Psoas muscle (tissue), 8 donors: ENCODE measurements at regions of chr9 and their contacts with region 1.

Region 1: DNA sequence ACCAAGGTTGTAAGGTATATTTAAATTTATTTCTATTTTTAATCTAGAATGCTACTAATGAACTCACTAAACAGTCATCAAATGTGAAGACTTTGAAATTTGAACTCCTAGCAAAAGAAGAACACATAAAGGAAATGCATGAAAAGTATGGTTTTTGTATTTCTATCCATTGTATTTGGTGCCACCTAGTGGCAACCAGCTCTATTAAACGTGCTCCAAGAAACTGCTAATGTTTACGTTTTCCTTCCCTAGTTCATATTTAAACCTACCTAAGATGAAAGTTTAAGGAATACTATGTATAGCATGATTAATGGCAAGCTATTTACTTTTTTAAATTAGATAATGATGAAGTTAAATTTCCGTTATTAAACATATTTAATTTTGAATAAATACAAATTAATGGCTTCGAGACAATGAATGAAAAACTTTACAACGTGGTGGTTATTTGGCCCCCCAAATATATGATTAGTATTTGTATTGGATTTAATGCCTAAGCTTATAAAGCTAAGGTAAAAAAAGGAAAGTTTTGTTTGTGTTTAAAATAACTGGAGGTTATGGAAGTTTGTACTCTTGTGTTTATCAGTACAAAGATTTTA is 115.9 kb upstream of the SH3GL2 start:
- DNase-seq: no peak
- ATAC-seq: peak in 2 of 4 donors; percentile 38 to 67
- H3K4me3 ChIP-seq: no peak overlapping the region
- H3K27ac ChIP-seq: no peak overlapping the region
- H3K4me1 ChIP-seq: no peaks in the 10 kb centered on the region
- H3K27me3 ChIP-seq: no peaks in the 10 kb centered on the region
- CTCF ChIP-seq: peak; percentile 81

Region 2: DNA sequence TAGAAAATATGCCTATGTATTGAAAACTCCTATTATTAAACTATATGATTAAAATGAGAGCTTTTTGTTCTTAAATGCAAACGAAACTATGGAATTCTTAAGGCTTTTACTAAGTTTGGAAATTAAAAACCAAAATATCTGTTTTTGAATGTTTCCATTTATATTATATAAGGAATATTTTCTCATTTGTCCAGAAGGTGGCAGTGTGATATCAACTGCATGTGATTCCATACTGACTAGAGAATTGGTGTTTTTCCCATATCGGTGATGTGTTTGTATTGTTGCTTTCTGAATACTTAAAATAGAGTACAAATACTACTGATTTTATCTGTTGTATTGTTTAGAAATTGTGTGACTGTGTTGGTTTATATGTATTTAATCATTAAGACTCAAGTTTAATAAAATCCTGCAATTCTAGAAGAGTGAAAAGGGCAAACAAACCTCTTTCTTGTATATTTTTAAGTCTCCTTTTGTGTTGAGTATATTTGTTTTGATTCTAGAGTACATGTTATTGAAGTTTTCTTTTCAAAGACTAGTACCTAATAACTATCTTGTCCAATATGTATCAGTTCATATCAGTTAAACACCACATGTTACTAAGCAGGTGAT is 1589.3 kb before region 1 on chr9:
- intact Hi-C with region 1: loop called in 1 of 2 experiments (anchors 5 kb)
- DNase-seq: no peak
- ATAC-seq: peak in 1 of 4 donors; percentile 63
- H3K4me3 ChIP-seq: no peak overlapping the region
- H3K27ac ChIP-seq: no peak overlapping the region
- H3K4me1 ChIP-seq: no peaks in the 10 kb centered on the region
- H3K27me3 ChIP-seq: no peaks in the 10 kb centered on the region
- CTCF ChIP-seq: peak; percentile 68

Region 3: GRCh38 chr9:17116400-17116837 is 346.5 kb before region 1 on chr9:
- intact Hi-C with region 1: loop called (anchors 2 kb)
- DNase-seq: no peak
- ATAC-seq: peak in 1 of 4 donors; percentile 68
- H3K4me3 ChIP-seq: no peak overlapping the region
- H3K27ac ChIP-seq: no peak overlapping the region
- H3K4me1 ChIP-seq: no peaks in the 10 kb centered on the region
- H3K27me3 ChIP-seq: no peaks in the 10 kb centered on the region
- CTCF ChIP-seq: peak; percentile 59